ENCODE measurements at regions of chr2 and their contacts with region 1.

Region 1: GRCh38 chr2:8681786-8682692 is at the start of gene ID2:
- H3K4me3 Mint-ChIP-seq: peak within 1 kb of the TSS; percentile 95
- H3K27ac Mint-ChIP-seq: peak within 1 kb of the TSS; percentile 94
- H3K4me1 Mint-ChIP-seq: peaks cover 67% of the 10 kb centered on the region
- H3K27me3 Mint-ChIP-seq: peaks cover 15% of the 10 kb centered on the region

Region 2: GRCh38 chr2:7203055-7203467 is 1479.0 kb before region 1 on chr2:
- intact Hi-C with region 1: loop called (anchors 5 kb)
- H3K4me3 Mint-ChIP-seq: no peak overlapping the region
- H3K27ac Mint-ChIP-seq: no peak overlapping the region
- H3K4me1 Mint-ChIP-seq: peaks cover 13% of the 10 kb centered on the region
- H3K27me3 Mint-ChIP-seq: peaks cover 2% of the 10 kb centered on the region

Region 3: GRCh38 chr2:7672027-7672684 is 1009.9 kb before region 1 on chr2:
- intact Hi-C with region 1: loop called (anchors 5 kb)
- H3K4me3 Mint-ChIP-seq: no peak overlapping the region
- H3K27ac Mint-ChIP-seq: no peak overlapping the region
- H3K4me1 Mint-ChIP-seq: peaks cover 11% of the 10 kb centered on the region
- H3K27me3 Mint-ChIP-seq: peaks cover 2% of the 10 kb centered on the region

Region 4: DNA sequence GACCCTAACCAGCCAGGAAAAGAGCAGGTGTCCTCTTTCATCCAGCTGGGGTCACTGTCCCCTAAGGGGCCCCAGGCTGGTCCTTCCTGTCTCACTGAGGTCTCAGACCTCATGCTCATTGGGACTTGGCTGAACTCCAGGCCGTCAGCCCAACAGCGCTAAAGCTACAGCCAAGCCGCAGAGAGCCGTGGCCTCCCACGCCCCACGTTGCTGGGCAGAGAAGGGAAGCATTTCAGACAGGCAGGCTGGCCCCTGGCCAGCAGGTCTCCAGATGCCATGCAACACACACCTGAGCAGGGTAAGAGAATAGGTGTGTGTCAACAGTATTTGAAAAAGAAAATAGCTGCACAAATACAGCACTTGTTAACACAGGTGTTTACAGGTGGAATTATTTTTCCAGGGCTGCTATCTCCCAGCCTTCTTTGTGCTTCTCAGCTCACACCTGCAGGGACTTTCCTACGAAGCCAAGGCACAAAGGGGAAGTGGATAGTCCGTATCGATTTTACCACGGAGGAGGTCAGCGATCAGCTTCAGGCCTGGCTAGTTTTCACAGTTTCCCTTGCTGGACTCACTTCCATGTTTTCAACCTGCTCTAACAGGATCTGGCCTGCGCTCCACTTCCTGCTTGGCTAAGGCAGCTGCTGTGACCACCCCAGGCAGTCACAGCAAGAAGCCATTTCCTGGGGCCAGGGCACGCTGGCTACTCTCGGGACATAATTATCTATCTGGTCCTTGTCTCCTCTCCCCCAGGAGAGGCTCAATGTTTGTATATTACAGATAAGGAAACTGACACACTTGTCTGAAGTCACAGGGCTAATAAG is 156.2 kb before region 1 on chr2:
- intact Hi-C with region 1: loop called (anchors 2 kb)
- H3K4me3 Mint-ChIP-seq: peak overlapping the region; percentile 56
- H3K27ac Mint-ChIP-seq: peak overlapping the region; percentile 80
- H3K4me1 Mint-ChIP-seq: peaks cover 93% of the 10 kb centered on the region
- H3K27me3 Mint-ChIP-seq: peaks cover 3% of the 10 kb centered on the region

Region 5: DNA sequence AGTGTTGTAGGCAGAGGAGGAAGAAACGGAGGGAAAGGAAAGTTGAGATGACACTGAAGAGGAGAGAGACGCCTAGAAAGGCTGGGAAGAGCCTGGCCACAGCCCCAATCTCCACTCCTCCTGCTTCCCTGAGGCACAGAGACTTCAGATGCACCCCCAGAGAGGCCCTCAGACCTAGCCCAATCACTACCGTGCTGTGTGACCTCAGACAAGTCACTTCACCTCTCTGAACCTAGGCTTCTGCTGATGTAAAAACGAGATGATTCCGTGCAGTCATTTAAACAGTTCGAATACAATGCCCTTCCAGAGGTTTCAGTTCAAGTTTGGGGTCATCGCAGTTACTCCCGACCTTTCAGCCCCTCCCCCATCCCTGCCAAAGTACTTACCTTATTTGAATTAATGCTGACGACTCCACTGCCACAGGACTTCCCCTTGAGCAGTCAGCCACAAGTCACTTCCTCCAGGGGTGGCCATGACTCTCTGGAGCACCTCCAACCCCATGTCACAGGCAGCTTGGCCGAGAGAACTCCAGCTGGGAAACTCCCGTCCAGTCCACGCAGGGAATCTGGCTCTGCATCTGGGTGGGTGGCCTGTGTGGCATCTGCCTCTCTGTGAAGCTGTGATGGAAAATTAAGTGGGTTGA is 105.4 kb before region 1 on chr2:
- intact Hi-C with region 1: loop called (anchors 2 kb)
- H3K4me3 Mint-ChIP-seq: no peak overlapping the region
- H3K27ac Mint-ChIP-seq: peak overlapping the region; percentile 60
- H3K4me1 Mint-ChIP-seq: peaks cover 82% of the 10 kb centered on the region
- H3K27me3 Mint-ChIP-seq: peaks cover 15% of the 10 kb centered on the region

Region 6: GRCh38 chr2:8794923-8795825 is 113.1 kb after region 1 on chr2:
- intact Hi-C with region 1: no loop called
- H3K4me3 Mint-ChIP-seq: no peak overlapping the region
- H3K27ac Mint-ChIP-seq: no peak overlapping the region
- H3K4me1 Mint-ChIP-seq: no peaks in the 10 kb centered on the region
- H3K27me3 Mint-ChIP-seq: no peaks in the 10 kb centered on the region

Measured in dendritic cell treated with granulocyte-macrophage colony-stimulating factor and Interleukin-4, amounts not matched to agents 40 ng/mL and 50 ng/mL, for 4 days (primary cell).